ENCODE measurements at regions of chr1 and their contacts with region 1.

Region 1: GRCh38 chr1:205591522-205592351 is 40.1 kb downstream of the ELK4 start:
- DNase-seq: peak; percentile 47
- H3K4me3 ChIP-seq: peak overlapping the region; percentile 37
- CTCF ChIP-seq: peak; percentile 98

Region 2: GRCh38 chr1:205543411-205544301 is 48.1 kb before region 1 on chr1:
- in situ Hi-C with region 1: no loop called
- DNase-seq: peak; percentile 63
- H3K4me3 ChIP-seq: peak overlapping the region; percentile 19
- CTCF ChIP-seq: no peak

Region 3: DNA sequence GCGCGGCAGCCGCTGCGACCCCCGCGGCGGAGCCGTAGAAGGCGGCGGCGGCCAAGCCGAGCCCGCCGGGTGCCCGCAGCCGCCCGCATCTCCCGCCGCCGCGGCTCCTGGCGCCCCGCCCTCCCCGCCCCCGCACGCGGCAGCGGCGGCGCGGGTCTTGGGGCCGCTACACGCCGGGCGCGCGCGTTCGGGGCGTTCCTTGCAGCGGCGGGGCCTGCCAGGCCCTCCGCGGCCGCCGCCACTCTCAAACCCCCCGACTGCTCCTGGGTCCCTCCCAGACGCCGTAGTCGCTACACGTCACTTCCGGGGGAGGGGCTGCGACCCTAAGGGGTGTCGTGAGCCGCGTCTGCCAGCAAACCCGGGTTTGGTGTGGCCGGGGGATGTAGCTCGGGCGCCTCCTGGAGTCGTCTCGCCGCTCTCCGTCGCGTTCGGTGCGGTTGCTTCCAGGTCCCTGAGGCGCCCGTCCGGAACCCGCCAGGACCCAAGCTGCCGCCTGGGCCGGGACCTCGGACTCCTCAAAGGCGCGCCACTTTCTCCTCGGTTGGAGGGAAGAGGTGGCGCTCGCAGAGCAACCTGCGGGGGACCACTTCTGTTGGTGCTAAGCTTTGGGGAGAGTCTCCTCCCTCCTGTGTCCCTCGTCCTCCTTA is 40.1 kb after region 1 on chr1 and contains the start of gene ELK4:
- in situ Hi-C with region 1: loop called (anchors 5 kb)
- DNase-seq: peak; percentile 96
- H3K4me3 ChIP-seq: peak within 1 kb of the TSS; percentile 77
- CTCF ChIP-seq: peak; percentile 76

Region 4: GRCh38 chr1:205650241-205650640 is 58.5 kb after region 1 on chr1:
- in situ Hi-C with region 1: loop called (anchors 5 kb)
- DNase-seq: no peak
- H3K4me3 ChIP-seq: no peak overlapping the region
- CTCF ChIP-seq: no peak

Region 5: GRCh38 chr1:205711104-205712020 is 119.6 kb after region 1 on chr1:
- in situ Hi-C with region 1: loop called (anchors 5 kb)
- DNase-seq: peak; percentile 81
- H3K4me3 ChIP-seq: no peak overlapping the region
- CTCF ChIP-seq: peak; percentile 92